Esophagus muscularis mucosa (tissue), 4 donors: ENCODE measurements at regions of chr6 and their contacts with region 1.

Region 1: GRCh38 chr6:105331927-105332326 is 71.0 kb downstream of the PREP start:
- DNase-seq: peak; percentile 29
- H3K4me3 ChIP-seq: no peak overlapping the region
- H3K27ac ChIP-seq: no peak overlapping the region
- H3K4me1 ChIP-seq: peaks cover 3 to 6% (median 4%) of the 10 kb centered on the region in 4 donors
- H3K27me3 ChIP-seq: no peaks in the 10 kb centered on the region
- CTCF ChIP-seq: no peak
- EP300 ChIP-seq: no peak
- POLR2A ChIP-seq: no peak

Region 2: DNA sequence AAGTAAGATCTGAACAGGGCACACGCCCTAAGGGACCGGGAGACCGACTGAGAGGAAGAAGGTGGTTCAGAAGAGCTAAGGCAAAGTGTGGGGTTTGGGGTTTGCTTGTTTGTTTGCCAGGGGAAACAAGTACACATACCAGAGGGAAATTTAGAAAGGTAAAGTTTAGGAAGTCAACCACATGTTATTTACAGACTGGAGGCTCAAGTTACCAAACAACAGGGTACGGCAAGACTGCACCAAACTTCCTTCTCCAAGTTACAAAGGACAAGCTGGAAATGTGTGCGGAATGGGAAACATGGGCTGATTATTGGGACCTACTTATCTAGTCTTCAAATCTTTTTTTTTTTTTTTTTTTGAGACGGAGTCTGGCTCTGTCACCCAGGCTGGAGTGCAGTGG is 59.8 kb after region 1 on chr6:
- intact Hi-C with region 1: loop called (anchors 2 kb)
- DNase-seq: no peak
- H3K4me3 ChIP-seq: no peak overlapping the region
- H3K27ac ChIP-seq: no peak overlapping the region
- H3K4me1 ChIP-seq: no peaks in the 10 kb centered on the region
- H3K27me3 ChIP-seq: no peaks in the 10 kb centered on the region
- CTCF ChIP-seq: no peak
- EP300 ChIP-seq: no peak
- POLR2A ChIP-seq: no peak

Region 3: GRCh38 chr6:105626295-105627158 is 294.6 kb after region 1 on chr6:
- intact Hi-C with region 1: no loop called
- DNase-seq: no peak
- H3K4me3 ChIP-seq: no peak overlapping the region
- H3K27ac ChIP-seq: no peak overlapping the region
- H3K4me1 ChIP-seq: peaks cover 0 to 4% (median 0%) of the 10 kb centered on the region in 4 donors
- H3K27me3 ChIP-seq: no peaks in the 10 kb centered on the region
- CTCF ChIP-seq: no peak
- EP300 ChIP-seq: no peak
- POLR2A ChIP-seq: no peak